HEK293T (cell line): ENCODE measurements at regions of chr9 and their contacts with region 1.

Region 1: GRCh38 chr9:110183208-110184145 is 24.5 kb downstream of the C9orf152 start:
- DNase-seq: peak; percentile 72

Region 2: DNA sequence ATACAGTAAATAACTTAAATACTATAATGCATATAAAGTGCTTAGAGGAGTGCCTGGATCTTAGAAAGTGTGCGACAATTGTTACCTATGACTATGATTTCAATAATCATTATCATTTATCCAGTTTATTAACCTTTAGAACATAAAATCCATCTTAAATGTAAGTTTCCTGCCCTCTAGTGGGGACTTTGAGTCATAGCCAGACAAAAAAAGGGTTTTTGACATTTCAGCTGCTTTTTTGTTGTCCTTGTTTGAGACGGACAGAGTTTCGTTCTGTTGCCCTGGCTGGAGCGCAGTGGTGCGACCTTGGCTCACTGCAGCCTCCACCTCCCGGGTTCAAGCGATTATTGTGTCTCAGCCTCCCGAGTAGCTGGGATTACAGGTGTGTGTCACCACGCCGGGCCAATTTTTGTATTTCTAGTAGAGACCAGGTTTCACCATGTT is 34.2 kb after region 1 on chr9:
- CTCF ChIA-PET with region 1: interaction called, 12 read pairs
- POLR2A ChIA-PET with region 1: interaction called, 3 read pairs
- DNase-seq: no peak

Region 3: DNA sequence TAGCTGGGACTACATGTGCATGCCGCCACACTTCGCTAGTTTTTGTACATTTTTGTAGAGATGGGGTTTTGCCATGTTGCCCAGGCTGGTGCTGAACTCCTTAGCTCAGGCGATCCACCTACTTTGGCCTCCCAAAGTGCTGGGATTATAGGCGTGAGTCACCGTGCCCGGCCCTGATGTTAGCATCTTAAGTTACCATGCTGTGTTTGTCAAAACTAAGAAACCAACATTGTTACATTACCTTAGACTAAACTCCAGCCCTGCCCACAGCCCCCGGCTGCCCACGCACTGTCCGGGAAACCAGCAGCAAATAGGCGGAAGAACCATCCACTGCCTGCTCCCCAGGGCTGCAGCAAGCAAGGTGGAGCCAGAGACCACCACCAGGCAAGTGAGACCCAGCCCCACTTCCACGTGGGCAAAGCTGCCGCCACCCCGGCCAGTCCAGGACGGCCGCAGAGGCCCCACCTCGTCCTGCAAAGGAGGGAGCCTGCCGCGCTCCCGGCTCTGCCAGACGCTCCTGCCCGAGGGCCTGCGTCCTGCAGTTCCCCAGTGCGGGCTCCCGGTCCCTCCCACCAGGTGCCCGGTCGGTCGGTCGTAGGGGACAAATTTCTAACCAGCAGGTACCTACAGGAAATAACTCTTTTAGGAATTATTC is 108.6 kb after region 1 on chr9:
- CTCF ChIA-PET with region 1: no interaction called
- POLR2A ChIA-PET with region 1: no interaction called
- DNase-seq: no peak

Region 4: GRCh38 chr9:110623462-110624025 is 440.1 kb after region 1 on chr9:
- CTCF ChIA-PET with region 1: interaction called, 10 read pairs
- POLR2A ChIA-PET with region 1: no interaction called
- DNase-seq: peak; percentile 49